IMR-90 (cell line): ENCODE measurements at regions of chr15 and their contacts with region 1.

Region 1: GRCh38 chr15:101188637-101189408 is 63.0 kb downstream of the CHSY1 start:
- DNase-seq: peak; percentile 91
- ATAC-seq: peak; percentile 47
- H3K4me3 ChIP-seq: peak overlapping the region; percentile 38
- H3K27ac ChIP-seq: peak overlapping the region; percentile 100
- H3K4me1 ChIP-seq: peaks cover 37% of the 10 kb centered on the region
- H3K27me3 ChIP-seq: no peaks in the 10 kb centered on the region
- CTCF ChIP-seq: no peak
- POLR2A ChIP-seq: peak; percentile 72
- RAD21 ChIP-seq: no peak; the same call in 1 of the 2 replicates

Region 2: GRCh38 chr15:101088788-101089583 is 99.8 kb before region 1 on chr15:
- CTCF ChIA-PET with region 1: no interaction called
- POLR2A ChIA-PET with region 1: no interaction called
- dilution Hi-C with region 1: no loop called
- in situ Hi-C with region 1: no loop called
- intact Hi-C with region 1: loop called (anchors 2 kb)
- DNase-seq: no peak
- ATAC-seq: peak; percentile 93
- H3K4me3 ChIP-seq: no peak overlapping the region
- H3K27ac ChIP-seq: no peak overlapping the region
- H3K4me1 ChIP-seq: peaks cover 15% of the 10 kb centered on the region
- H3K27me3 ChIP-seq: no peaks in the 10 kb centered on the region
- CTCF ChIP-seq: peak; percentile 95
- POLR2A ChIP-seq: peak; percentile 40; the same call in 1 of the 2 replicates
- RAD21 ChIP-seq: peak; percentile 93

Region 3: GRCh38 chr15:101121511-101122090 is 67.2 kb before region 1 on chr15:
- CTCF ChIA-PET with region 1: no interaction called
- POLR2A ChIA-PET with region 1: no interaction called
- dilution Hi-C with region 1: no loop called
- in situ Hi-C with region 1: no loop called
- intact Hi-C with region 1: loop called (anchors 2 kb)
- DNase-seq: peak; percentile 74
- ATAC-seq: peak; percentile 84
- H3K4me3 ChIP-seq: peak overlapping the region; percentile 5; the same call in 1 of the 2 replicates
- H3K27ac ChIP-seq: peak overlapping the region; percentile 76
- H3K4me1 ChIP-seq: peaks cover 20% of the 10 kb centered on the region
- H3K27me3 ChIP-seq: no peaks in the 10 kb centered on the region
- CTCF ChIP-seq: peak; percentile 56
- POLR2A ChIP-seq: no peak; the same call in 1 of the 2 replicates
- RAD21 ChIP-seq: peak; percentile 64

Region 4: DNA sequence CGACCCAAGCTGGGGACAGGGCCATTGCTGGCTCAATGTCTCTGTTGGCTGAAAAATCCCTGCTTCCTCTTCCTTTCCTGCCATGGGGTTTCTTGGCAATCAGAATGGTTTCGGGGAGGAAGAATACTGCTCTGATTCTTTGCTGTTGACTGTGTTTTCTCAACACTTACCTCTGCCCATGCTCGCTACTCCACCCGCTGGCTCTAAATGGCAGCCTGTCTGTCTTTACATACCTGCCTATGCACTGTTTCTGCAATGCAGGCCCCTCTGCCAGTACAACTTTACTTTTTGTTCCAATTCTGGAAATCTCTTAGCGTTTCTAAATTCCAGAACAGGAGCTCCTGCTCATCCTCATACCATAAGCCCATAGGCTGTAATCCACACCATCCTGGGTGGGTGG is 144.6 kb after region 1 on chr15:
- CTCF ChIA-PET with region 1: no interaction called
- POLR2A ChIA-PET with region 1: no interaction called
- dilution Hi-C with region 1: no loop called
- in situ Hi-C with region 1: no loop called
- intact Hi-C with region 1: no loop called
- DNase-seq: no peak
- ATAC-seq: no peak
- H3K4me3 ChIP-seq: no peak overlapping the region
- H3K27ac ChIP-seq: no peak overlapping the region
- H3K4me1 ChIP-seq: no peaks in the 10 kb centered on the region
- H3K27me3 ChIP-seq: peaks cover 15% of the 10 kb centered on the region
- CTCF ChIP-seq: no peak
- POLR2A ChIP-seq: no peak
- RAD21 ChIP-seq: no peak